ENCODE measurements at regions of chr1 and their contacts with region 1.

Region 1: DNA sequence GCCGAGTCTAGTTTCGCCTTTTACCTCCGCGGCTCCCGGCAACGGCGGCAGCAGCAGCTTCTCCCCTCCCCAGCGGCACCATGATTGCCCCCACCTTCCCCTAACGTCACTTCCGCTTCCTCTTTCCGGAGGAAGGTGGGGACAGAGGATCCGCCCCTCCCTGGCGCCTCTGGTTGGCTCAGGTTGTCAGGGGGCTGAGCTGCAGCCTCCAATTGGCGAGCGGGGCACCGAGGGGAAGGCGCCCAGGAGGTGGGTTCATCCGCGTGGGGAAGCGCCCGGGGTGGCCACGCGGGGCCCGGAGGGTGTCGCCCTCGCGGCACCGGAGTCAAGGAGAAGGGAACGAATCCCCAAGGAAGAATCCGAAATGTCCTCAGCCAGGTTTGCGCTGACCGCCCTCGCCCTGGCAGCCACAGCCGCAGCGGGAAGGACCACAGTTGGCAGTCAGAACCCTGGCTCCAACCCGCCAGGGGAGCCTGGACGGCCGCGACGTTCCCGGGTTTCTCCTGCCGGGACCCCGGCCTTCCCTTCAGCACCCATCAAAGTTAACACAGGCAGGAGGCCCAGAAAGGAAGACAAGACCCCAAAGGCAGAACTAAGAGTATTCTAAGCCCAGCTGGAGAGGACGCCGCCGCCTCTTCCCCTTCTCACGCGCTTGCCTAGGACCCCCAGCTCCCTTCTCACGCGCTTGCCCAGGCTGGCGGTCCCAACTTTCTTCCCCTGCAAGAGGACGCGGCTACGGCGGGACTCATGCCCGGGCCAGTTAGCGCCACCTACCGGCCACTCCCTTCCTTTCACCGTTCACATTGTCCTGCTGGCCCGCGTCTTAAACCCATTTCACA is at the start of gene MTF1:
- DNase-seq: peak; percentile 90 to 99
- ATAC-seq: peak; percentile 97 to 99 (median 98)
- H3K4me3 ChIP-seq: peak within 1 kb of the TSS; percentile 99
- H3K4me3 Mint-ChIP-seq: peak within 1 kb of the TSS; percentile 99
- H3K27ac ChIP-seq: peak within 1 kb of the TSS; percentile 92
- H3K27ac Mint-ChIP-seq: peak within 1 kb of the TSS; percentile 88 to 92
- H3K4me1 ChIP-seq: peaks cover 18% of the 10 kb centered on the region
- H3K4me1 Mint-ChIP-seq: peaks cover 34 to 35% of the 10 kb centered on the region in 2 donors
- H3K27me3 ChIP-seq: no peaks in the 10 kb centered on the region
- H3K27me3 Mint-ChIP-seq: no peaks in the 10 kb centered on the region
- CTCF ChIP-seq: peak; percentile 86
- total RNA-seq, gene MTF1: 31.2 to 35.6 (median 32.7) TPM

Region 2: GRCh38 chr1:37811027-37811655 is 48.6 kb before region 1 on chr1:
- intact Hi-C with region 1: loop called (anchors 1 kb)
- DNase-seq: peak; percentile 51 to 83
- ATAC-seq: peak; percentile 34 to 64 (median 49)
- H3K4me3 ChIP-seq: no peak overlapping the region
- H3K4me3 Mint-ChIP-seq: peak overlapping the region; percentile 17
- H3K27ac ChIP-seq: no peak overlapping the region
- H3K27ac Mint-ChIP-seq: peak overlapping the region; percentile 64 to 65
- H3K4me1 ChIP-seq: peaks cover 20% of the 10 kb centered on the region
- H3K4me1 Mint-ChIP-seq: peaks cover 14 to 20% of the 10 kb centered on the region in 2 donors
- H3K27me3 ChIP-seq: no peaks in the 10 kb centered on the region
- H3K27me3 Mint-ChIP-seq: no peaks in the 10 kb centered on the region
- CTCF ChIP-seq: peak; percentile 91